ENCODE measurements at regions of chr12 and their contacts with region 1.

Region 1: DNA sequence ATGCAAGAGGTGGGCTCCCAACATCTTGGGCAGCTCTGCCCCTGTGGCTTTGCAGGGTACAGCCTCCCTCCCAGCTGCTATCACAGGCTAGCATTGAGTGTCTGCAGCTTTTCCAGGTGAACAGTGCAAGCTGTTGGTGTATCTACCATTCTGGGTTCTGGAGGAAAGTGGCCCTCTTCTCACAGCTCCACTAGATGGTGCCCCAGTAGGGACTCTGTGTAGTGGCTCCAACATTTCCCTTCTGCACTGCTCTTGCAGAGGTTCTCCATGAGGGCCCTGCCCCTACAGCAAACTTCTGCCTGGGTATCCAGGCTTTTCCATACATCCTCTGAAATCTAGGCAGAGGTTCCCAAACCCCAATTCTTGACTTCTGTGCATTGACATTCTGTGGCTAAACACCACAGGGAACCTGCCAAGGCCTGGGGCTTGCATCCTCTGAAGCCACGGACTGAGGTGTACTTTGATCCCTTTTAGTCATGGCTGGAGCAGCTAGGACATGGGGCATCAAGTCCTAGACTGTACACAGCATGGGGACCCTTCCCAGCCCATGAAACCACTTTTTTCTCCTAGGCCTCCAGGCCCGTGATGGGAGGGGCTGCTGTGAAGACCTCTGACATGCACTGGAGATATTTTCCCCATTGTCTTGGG is 24.0 kb upstream of the SLC38A1 start:
- DNase-seq: no peak
- ATAC-seq: no peak
- H3K4me3 ChIP-seq: no peak overlapping the region
- H3K27ac ChIP-seq: no peak overlapping the region
- H3K4me1 ChIP-seq: no peaks in the 10 kb centered on the region
- H3K27me3 ChIP-seq: no peaks in the 10 kb centered on the region
- CTCF ChIP-seq: peak in 5 of 12 donors; percentile 3 to 26 (median 14)
- POLR2A ChIP-seq: no peak

Region 2: GRCh38 chr12:46124848-46125619 is 167.8 kb before region 1 on chr12:
- intact Hi-C with region 1: loop called in 1 of 10 experiments (anchors 10 kb)
- DNase-seq: peak in 3 of 5 donors; percentile 35 to 44 (median 36)
- ATAC-seq: peak; percentile 85 to 92 (median 91)
- H3K4me3 ChIP-seq: peak overlapping the region in 3 of 12 donors; percentile 22 to 38 (median 25)
- H3K27ac ChIP-seq: peak overlapping the region in 1 of 12 donors; percentile 27
- H3K4me1 ChIP-seq: peaks cover 0 to 14% (median 2%) of the 10 kb centered on the region in 12 donors
- H3K27me3 ChIP-seq: peaks cover 0 to 5% (median 0%) of the 10 kb centered on the region in 9 donors
- CTCF ChIP-seq: peak; percentile 23 to 77 (median 60)
- POLR2A ChIP-seq: no peak

Region 3: DNA sequence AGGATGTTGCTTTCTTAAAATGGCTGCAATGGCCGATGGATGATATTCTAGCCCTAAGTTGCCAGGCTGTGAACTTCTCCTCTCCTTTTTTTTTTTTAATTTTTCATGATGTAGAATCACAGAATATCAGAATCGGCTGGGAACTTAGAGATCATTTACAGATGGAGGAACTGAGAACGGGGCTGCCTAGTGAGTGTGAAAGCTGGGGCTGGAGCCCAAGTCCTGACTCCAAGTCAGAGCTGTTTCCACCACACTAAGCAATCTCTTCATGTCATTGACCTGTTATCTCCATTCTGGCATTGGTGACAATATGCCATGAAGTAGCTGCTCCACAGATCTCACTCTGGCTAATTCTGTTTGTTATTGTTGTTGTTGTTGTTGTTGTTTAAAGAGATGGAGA is 145.7 kb before region 1 on chr12:
- intact Hi-C with region 1: loop called in 1 of 10 experiments (anchors 10 kb)
- DNase-seq: no peak
- ATAC-seq: no peak
- H3K4me3 ChIP-seq: no peak overlapping the region
- H3K27ac ChIP-seq: no peak overlapping the region
- H3K4me1 ChIP-seq: no peaks in the 10 kb centered on the region
- H3K27me3 ChIP-seq: peaks cover 0 to 6% (median 0%) of the 10 kb centered on the region in 9 donors
- CTCF ChIP-seq: no peak
- POLR2A ChIP-seq: no peak

Region 4: GRCh38 chr12:46209914-46210872 is 82.7 kb before region 1 on chr12:
- intact Hi-C with region 1: no loop called
- DNase-seq: peak; percentile 24 to 75 (median 65)
- ATAC-seq: peak; percentile 83 to 90 (median 88)
- H3K4me3 ChIP-seq: no peak overlapping the region
- H3K27ac ChIP-seq: peak overlapping the region; percentile 31 to 77 (median 66)
- H3K4me1 ChIP-seq: peaks cover 0 to 74% (median 21%) of the 10 kb centered on the region in 12 donors
- H3K27me3 ChIP-seq: no peaks in the 10 kb centered on the region
- CTCF ChIP-seq: no peak
- POLR2A ChIP-seq: no peak

Region 5: DNA sequence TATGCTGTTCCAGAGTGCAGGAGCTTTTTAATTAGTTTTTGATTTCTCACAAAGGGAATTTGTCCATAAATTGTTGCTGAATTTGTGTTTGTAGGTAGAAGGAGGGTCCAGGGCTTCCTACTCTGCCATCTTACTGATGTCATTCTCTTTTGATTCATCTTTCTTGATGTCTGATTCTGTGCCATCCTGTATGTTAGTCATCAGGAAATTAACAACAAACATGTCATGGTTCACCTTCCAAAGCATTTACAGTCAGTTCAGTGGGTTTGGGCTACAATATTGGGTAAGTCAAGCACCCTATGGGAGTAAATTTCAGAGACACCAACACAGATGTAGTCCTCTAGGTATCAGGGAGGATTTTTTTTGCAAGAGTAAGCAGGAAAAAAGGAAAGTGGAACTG is 214.9 kb after region 1 on chr12:
- intact Hi-C with region 1: no loop called
- DNase-seq: no peak
- ATAC-seq: no peak
- H3K4me3 ChIP-seq: no peak overlapping the region
- H3K27ac ChIP-seq: no peak overlapping the region
- H3K4me1 ChIP-seq: no peaks in the 10 kb centered on the region
- H3K27me3 ChIP-seq: no peaks in the 10 kb centered on the region
- CTCF ChIP-seq: no peak
- POLR2A ChIP-seq: no peak